ENCODE measurements at regions of chr1 and their contacts with region 1.

Region 1: GRCh38 chr1:78743626-78744025 is 94.0 kb downstream of the IFI44 start:
- DNase-seq: no peak

Region 2: DNA sequence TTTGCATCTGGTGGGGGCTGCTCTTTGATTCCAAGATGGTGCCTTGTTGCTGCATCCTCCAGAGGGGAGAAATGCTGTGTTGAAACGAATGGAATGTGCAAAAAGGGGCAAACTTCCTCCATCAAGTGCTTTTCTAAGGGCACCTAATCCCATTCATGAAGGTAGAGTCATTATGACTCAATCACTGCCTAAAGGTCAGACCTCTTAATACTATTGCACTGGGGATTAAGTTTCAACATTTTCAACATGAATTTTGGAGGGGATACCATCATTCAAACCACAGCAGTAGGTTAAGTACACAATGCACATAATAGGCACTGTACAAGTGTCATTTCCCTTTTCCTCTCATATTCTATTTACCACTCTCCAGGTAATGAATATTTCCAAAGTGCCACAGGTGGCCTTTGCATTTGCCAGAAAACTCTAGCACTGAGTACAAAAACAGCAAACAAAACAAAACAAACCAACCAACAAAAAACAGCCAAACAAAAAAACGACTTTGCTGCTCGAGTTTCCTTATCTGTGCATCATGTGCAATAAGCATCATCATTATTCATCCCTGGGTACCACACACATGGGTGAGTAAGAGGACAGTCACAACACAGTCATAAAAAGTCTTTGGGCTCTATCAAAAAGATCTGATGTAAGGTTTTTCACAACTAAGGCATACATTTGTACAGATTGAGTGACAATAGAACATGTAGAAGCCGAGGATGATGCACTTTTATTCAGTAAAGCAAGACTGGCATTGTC is 51.5 kb before region 1 on chr1:
- intact Hi-C with region 1: loop called in 1 of 2 experiments (anchors 2 kb)
- DNase-seq: no peak